PC-9 (cell line): ENCODE measurements at regions of chr11 and their contacts with region 1.

Region 1: GRCh38 chr11:2930704-2931428 is 1.6 kb upstream of the PHLDA2 start:
- DNase-seq: peak; percentile 72 to 87
- H3K4me3 ChIP-seq: peak overlapping the region; percentile 57
- H3K27ac ChIP-seq: peak overlapping the region; percentile 99
- H3K4me1 ChIP-seq: peaks cover 40% of the 10 kb centered on the region
- H3K27me3 ChIP-seq: no peaks in the 10 kb centered on the region
- CTCF ChIP-seq: peak; percentile 83

Region 2: DNA sequence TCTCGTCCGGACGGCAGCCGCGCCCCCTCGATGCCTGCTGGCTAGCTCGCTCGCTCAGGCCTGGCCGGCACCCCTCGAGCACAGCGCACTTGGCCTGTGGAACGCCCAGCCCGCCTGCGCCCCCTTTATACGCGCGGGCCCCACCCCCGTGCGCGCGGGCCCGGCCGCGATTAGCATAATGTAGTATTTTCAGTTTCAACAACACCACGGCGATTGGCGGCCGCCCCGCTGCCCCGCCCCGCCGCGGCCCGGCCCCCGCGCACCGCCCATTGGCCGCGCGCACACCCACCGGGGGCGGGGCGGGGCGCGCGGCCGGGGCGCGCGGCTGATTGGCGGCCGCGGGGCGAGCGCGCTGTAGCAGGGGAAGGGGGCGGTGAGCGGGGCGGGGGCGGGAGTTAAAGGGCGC is 45.2 kb before region 1 on chr11 and contains the start of gene CDKN1C:
- CTCF ChIA-PET with region 1: interaction called, 11 read pairs
- POLR2A ChIA-PET with region 1: no interaction called
- intact Hi-C with region 1: no loop called
- DNase-seq: peak; percentile 47 to 71
- H3K4me3 ChIP-seq: peak within 1 kb of the TSS; percentile 55; the same call in 1 of the 2 replicates
- H3K27ac ChIP-seq: no peak within 1 kb of the TSS
- H3K4me1 ChIP-seq: no peaks in the 10 kb centered on the region
- H3K27me3 ChIP-seq: no peaks in the 10 kb centered on the region
- CTCF ChIP-seq: no peak
- total RNA-seq, gene CDKN1C: 5.1 and 7.6 TPM in 2 replicates

Region 3: GRCh38 chr11:2892215-2893020 is 38.4 kb before region 1 on chr11:
- CTCF ChIA-PET with region 1: interaction called, 11 read pairs
- POLR2A ChIA-PET with region 1: interaction called, 6 read pairs
- intact Hi-C with region 1: loop called (anchors 1 kb)
- DNase-seq: peak; percentile 50 to 57
- H3K4me3 ChIP-seq: peak overlapping the region; percentile 62; the same call in 1 of the 2 replicates
- H3K27ac ChIP-seq: peak overlapping the region; percentile 63
- H3K4me1 ChIP-seq: peaks cover 8% of the 10 kb centered on the region; the same call in 1 of the 2 replicates
- H3K27me3 ChIP-seq: no peaks in the 10 kb centered on the region
- CTCF ChIP-seq: peak; percentile 91

Region 4: DNA sequence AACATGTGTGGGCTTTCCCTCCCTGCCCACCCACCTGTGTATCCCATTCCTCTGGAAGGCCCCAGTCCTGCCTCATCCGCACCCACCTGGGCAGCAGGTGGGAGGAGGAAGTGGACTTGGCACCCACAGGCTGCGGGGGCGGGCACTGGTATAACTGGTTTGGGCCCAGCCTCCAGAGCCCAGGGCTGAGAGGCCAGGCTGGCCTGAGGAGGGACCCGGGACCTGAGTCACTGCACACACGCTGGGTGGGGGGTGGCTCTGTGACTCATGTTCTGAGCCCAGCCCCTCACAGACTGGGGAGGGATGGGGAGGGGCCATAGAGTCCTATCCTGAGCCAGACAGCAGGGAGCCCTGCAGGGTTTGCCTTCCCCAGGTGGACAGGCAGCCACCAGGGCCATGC is 18.4 kb before region 1 on chr11:
- CTCF ChIA-PET with region 1: no interaction called
- POLR2A ChIA-PET with region 1: no interaction called
- intact Hi-C with region 1: loop called (anchors 2 kb)
- DNase-seq: peak; percentile 90 to 94
- H3K4me3 ChIP-seq: peak overlapping the region; percentile 41; the same call in 1 of the 2 replicates
- H3K27ac ChIP-seq: peak overlapping the region; percentile 81
- H3K4me1 ChIP-seq: peaks cover 33% of the 10 kb centered on the region
- H3K27me3 ChIP-seq: no peaks in the 10 kb centered on the region
- CTCF ChIP-seq: no peak

Region 5: GRCh38 chr11:3021125-3021524 is 90.3 kb after region 1 on chr11:
- CTCF ChIA-PET with region 1: no interaction called
- POLR2A ChIA-PET with region 1: no interaction called
- intact Hi-C with region 1: loop called (anchors 5 kb)
- DNase-seq: peak; percentile 33 to 43
- H3K4me3 ChIP-seq: no peak overlapping the region
- H3K27ac ChIP-seq: no peak overlapping the region
- H3K4me1 ChIP-seq: no peaks in the 10 kb centered on the region; the same call in 1 of the 2 replicates
- H3K27me3 ChIP-seq: no peaks in the 10 kb centered on the region
- CTCF ChIP-seq: peak; percentile 52

Region 6: GRCh38 chr11:3217676-3218482 is 287.0 kb after region 1 on chr11:
- CTCF ChIA-PET with region 1: no interaction called
- POLR2A ChIA-PET with region 1: no interaction called
- intact Hi-C with region 1: loop called (anchors 5 kb)
- DNase-seq: no peak
- H3K4me3 ChIP-seq: no peak overlapping the region
- H3K27ac ChIP-seq: no peak overlapping the region
- H3K4me1 ChIP-seq: no peaks in the 10 kb centered on the region
- H3K27me3 ChIP-seq: peaks cover 19% of the 10 kb centered on the region
- CTCF ChIP-seq: no peak

Region 7: DNA sequence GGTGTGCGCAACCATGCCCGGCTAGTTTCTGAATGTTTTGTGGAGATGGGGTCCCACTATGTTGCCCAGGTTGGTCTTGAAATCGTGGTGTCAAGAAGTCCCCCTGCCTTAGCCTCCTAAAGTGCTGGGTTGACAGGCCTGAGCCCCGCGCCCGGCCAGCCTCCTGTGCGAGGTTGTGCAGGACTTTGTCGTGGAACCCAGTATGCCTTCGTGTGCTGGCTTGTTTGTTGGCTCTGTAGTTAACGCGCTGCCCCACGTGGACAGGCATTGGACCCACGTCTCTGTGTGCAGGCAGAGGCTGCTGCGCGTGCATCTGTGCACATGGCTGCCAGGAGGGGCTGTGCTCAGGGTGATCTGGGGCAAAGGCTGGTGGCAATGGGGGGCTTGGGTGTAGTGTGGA is 482.0 kb after region 1 on chr11:
- CTCF ChIA-PET with region 1: no interaction called
- POLR2A ChIA-PET with region 1: no interaction called
- intact Hi-C with region 1: loop called (anchors 5 kb)
- DNase-seq: no peak
- H3K4me3 ChIP-seq: no peak overlapping the region
- H3K27ac ChIP-seq: no peak overlapping the region
- H3K4me1 ChIP-seq: no peaks in the 10 kb centered on the region
- H3K27me3 ChIP-seq: no peaks in the 10 kb centered on the region
- CTCF ChIP-seq: no peak